AG04450 (cell line): ENCODE measurements at regions of chr2 and their contacts with region 1.

Region 1: DNA sequence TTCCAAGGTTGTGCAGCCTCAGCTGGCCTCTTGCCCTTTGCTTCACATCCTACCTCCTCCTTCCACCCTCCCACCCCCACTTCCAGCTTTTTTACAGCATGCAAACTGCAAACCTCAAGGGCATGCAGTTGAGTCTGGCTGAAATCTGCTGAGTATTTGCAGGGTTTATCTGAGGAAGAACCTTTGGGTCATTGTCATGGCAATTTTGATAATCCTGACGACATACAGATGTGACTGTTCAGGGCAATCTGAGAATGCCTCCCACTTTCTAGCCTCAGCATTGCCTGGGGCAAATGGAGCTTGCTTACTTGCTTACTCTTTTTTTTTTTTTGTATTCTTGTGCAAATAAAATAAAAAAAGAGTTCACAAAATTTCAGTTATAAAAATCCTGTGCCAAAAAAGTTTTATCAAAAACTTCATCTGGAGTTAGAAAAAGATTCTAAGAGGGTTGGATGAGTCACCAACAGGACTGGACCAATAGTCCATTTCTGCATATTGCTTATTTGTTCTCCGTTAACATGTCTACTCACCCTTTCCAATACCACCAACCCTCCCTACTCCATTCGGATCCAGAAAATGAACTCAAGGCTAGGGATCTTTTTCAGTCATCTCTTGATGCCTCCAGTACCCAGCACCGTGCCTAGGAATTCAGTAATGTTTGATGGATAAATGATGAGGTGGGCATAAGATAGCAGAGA is 23.6 kb upstream of the LHCGR start:
- DNase-seq: no peak
- H3K4me3 ChIP-seq: no peak overlapping the region
- H3K27ac ChIP-seq: no peak overlapping the region
- H3K27me3 ChIP-seq: no peaks in the 10 kb centered on the region
- CTCF ChIP-seq: no peak

Region 2: DNA sequence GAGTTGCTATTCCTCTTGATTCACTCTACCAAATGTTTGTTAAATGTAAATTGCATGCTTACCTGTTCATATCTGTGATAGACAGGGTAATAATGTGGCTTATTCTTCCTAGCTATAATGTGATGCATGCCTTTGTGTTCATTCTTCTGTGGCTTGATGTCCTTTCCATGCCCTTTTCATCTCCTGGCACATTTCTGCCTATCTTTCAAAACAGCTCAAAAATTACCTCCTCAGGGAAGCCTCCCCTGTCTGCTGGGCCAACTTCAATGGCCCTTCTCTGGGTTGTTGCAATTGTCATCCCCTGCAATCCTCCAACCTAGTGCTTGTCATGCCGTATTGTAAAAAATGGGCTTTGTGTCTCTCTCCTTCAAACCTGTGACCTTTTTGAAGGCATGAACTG is 29.1 kb after region 1 on chr2:
- CTCF ChIA-PET with region 1: interaction called, 11 read pairs
- POLR2A ChIA-PET with region 1: no interaction called
- DNase-seq: no peak
- H3K4me3 ChIP-seq: no peak overlapping the region
- H3K27ac ChIP-seq: no peak overlapping the region
- H3K27me3 ChIP-seq: no peaks in the 10 kb centered on the region
- CTCF ChIP-seq: no peak

Region 3: GRCh38 chr2:49129034-49129433 is 349.9 kb after region 1 on chr2:
- CTCF ChIA-PET with region 1: no interaction called
- POLR2A ChIA-PET with region 1: no interaction called
- DNase-seq: no peak
- H3K4me3 ChIP-seq: no peak overlapping the region
- H3K27ac ChIP-seq: no peak overlapping the region
- H3K27me3 ChIP-seq: no peaks in the 10 kb centered on the region
- CTCF ChIP-seq: no peak